Right cardiac atrium (tissue), 5 donors: ENCODE measurements at regions of chr4 and their contacts with region 1.

Region 1: DNA sequence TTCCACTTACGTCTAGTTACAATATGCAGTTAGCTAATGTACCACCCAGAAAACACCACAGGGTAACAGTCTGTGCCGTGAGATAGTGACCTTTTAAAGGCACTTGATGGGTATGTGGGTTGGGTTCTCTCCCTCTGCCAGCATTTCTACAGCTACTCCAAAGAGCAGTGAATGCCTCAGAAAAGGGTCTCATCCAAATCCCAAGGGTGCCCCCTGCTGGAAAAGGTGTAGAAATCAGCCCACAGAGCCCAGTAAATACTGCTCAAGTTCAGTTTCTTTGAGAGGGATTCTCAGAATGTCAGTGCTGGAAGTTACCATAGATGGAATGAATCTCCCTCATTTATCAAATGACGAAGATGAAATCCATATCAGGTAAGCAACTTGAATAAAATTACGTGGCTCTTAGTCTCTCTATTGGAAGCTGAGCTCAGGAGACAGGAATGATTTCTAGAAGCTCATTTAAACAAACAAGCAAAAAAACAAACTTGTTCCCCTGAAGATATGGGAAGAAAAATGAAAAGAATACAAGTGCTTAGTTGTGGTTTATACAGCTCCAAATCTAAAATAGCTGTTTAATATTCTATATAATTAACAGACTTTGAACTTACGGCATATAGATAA is 9.5 kb downstream of the RNF175 start:
- DNase-seq: peak in 1 of 3 donors; percentile 33
- ATAC-seq: peak; percentile 54 to 77
- H3K4me3 ChIP-seq: no peak overlapping the region
- H3K27ac ChIP-seq: no peak overlapping the region
- H3K4me1 ChIP-seq: no peaks in the 10 kb centered on the region
- H3K27me3 ChIP-seq: no peaks in the 10 kb centered on the region

Region 2: DNA sequence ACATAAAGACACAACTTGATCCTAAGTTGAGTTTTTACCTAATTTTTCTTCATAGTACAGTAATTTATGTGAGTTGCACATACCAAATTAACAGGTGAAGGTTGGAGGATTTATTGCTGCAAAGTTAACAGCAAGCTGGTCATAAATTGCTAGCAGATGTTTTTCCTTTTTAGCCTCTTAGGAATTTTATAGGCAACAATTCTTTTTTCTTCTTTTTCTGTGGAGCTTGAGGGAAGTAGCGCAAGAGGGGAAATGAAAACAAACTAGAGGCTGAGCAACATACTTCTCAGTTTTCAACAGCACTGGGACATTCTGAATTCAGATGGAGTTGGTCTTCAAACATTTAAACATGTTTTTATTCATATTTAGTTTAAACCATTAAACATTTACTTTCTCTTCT is 130.0 kb before region 1 on chr4:
- intact Hi-C with region 1: loop called in 1 of 4 experiments (anchors 10 kb)
- DNase-seq: no peak
- ATAC-seq: no peak
- H3K4me3 ChIP-seq: no peak overlapping the region
- H3K27ac ChIP-seq: no peak overlapping the region
- H3K4me1 ChIP-seq: no peaks in the 10 kb centered on the region
- H3K27me3 ChIP-seq: no peaks in the 10 kb centered on the region